PC-9 (cell line): ENCODE measurements at regions of chr4 and their contacts with region 1.

Region 1: DNA sequence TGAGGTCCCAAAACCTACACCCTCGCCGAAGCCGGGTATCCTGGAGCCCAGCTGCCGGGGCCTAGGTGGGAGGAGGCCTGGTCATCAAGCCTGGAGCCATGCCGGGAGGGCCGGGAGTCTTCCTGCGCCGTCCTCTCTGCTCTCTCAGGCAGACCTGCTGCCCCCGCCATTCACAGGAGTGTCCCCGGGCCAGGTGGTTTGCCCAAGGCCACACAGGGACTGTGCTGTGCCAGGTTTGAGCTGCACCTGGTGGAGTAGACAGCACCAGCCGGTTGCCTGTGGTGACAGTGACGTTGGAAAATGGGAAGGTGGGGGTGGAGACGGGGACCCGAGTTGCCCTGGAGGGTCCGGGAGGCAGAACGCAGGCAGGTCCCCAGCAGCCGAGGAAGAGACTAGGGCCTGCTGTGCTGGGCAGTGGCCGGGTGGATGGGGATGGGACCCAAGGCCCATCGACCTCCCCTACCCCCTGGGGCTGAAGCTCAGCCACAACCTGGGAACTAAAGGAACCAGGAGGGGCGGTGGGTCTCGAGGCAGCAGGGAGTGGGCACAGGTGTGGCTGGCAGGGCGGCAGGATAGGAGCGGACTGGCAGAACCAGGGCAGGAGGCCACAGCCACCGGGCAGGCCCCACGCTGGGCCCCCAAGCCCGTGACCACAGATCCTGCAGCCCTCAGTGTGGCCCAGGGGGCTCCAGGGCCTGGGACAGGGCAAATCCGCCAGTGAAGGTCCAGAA is 9.5 kb downstream of the DOK7 start:
- DNase-seq: no peak
- H3K4me3 ChIP-seq: no peak overlapping the region
- H3K27ac ChIP-seq: no peak overlapping the region
- H3K4me1 ChIP-seq: no peaks in the 10 kb centered on the region
- H3K27me3 ChIP-seq: no peaks in the 10 kb centered on the region
- CTCF ChIP-seq: no peak

Region 2: DNA sequence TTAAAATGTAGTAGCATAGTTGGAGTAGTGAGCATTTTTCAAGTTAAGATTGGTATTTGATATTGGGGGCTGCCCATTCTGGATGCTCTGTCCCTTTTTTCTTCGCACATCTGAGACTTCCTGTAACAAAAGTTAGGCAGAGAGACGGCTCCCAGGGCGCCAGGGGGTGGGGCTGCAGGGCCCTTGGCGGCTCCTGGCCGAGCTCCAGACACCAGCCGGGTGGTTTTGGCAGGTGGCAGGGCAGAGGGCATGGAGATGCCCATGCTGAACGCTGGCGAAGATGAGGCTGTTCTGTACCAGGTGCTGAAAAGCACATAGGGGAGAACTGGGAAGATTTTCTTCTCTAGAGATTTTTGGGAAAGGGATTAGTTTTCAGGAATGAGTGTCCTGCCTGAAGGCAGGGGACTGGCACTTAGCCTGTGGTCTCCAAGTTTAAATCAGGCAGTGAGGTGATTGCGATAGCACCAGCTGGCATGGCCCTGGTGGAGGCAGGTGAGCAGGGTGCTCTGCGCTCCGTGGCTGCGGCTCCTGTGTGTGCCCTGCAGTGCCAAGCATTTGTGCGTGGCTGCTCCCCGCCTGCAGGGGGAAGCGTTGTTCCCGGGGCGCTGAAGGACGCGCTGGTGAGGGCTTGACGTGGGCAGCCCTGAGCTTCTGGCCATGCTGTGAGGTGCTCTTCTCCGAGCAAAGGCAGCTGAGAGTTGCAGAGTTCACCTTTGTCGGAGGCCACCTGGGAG is 54.4 kb before region 1 on chr4:
- CTCF ChIA-PET with region 1: no interaction called
- POLR2A ChIA-PET with region 1: interaction called, 19 read pairs
- intact Hi-C with region 1: no loop called
- DNase-seq: no peak
- H3K4me3 ChIP-seq: no peak overlapping the region
- H3K27ac ChIP-seq: no peak overlapping the region
- H3K4me1 ChIP-seq: no peaks in the 10 kb centered on the region
- H3K27me3 ChIP-seq: no peaks in the 10 kb centered on the region
- CTCF ChIP-seq: no peak

Region 3: DNA sequence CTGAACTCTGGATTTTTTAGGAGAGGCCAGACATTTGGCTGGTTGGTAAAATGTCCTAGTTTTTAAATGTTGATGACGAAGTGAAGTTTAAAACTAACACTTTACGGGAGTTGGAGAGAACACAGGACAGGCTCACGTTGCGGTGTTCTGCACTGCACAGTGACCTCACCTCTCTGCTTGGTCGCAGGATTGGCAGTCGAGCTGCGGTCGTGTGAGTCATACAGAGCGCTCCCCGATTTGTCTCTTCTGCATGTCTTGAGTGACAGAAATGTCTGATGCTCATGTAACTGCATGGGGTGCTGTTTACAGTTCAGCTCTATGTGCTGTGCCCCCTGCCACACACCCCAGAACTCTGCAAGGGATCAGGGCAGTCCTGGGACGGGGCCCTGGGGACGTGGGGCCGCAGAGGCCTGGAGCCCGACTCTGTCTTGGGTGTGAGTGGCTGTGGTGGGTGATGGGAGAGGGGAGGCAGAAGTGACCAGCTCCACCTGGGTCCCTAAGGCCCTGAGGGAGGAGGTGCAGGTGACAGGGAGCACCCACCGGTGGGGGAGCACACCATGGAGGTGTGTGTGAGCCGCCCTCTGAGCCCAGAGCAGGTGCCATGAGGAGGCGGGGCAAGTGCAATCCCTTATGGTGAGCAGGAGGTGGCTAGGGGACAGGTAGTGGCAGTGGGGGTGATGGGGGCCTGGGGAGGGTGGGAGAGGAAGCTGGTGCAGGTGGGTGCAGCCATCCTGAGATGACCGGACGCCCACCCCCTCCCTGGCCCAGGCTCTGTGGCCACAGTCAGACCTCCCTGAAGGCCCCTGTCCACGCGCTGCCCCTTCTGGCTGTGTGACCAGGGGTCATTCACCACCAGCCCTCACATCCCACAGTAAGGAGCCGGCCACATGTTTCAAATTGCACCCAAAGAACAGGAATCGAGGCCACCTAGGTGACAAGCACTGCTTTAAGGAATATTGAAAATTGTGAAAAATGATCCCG is 215.7 kb after region 1 on chr4:
- CTCF ChIA-PET with region 1: no interaction called
- POLR2A ChIA-PET with region 1: no interaction called
- intact Hi-C with region 1: no loop called
- DNase-seq: no peak
- H3K4me3 ChIP-seq: no peak overlapping the region
- H3K27ac ChIP-seq: no peak overlapping the region
- H3K4me1 ChIP-seq: no peaks in the 10 kb centered on the region
- H3K27me3 ChIP-seq: peaks cover 66% of the 10 kb centered on the region
- CTCF ChIP-seq: no peak